ENCODE measurements at regions of chr6 and their contacts with region 1.

Region 1: DNA sequence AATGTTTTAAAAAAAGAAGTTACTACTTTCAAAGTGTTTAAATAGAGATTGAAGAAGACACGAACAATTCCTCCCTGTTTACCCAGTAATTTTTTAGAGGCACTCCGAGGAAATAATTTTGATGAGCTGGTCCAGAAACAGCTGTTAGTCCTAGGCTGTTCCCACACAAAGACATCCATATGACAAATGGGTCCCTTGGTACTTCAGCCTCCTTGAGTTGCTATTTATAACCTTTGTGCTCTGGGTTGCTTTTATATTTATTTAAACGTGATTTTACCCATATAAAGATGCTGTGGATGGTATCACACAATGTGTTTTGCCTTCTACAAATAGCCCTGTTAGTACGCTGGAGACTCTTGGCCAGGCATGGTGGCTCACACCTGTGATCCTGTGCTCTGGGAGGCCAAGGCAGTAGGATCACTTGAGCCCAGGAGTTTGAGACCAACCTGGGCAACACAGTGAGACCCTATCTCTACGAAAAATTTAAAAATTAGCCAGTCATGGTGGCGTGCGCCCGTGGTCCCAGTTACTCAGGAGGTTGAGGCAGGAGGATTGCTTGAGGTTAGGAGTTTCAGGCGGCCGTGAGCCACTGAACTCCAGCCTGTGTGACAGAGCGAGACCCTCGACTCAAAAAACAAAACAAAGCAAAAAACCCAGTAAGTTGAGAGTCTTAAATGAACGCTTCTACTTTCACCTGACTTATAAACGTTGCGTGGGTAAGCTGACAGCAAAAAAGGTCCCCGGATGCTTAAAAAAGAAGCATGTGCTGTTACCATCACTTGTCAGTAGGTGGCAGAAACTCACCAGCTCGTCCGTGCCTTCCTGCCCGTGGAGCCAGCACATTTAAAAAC is 56.9 kb upstream of the ARMH2 start:
- DNase-seq: peak; percentile 66
- ATAC-seq: peak; percentile 90
- H3K4me3 ChIP-seq: no peak overlapping the region
- H3K27ac ChIP-seq: no peak overlapping the region
- H3K4me1 ChIP-seq: peaks cover 13% of the 10 kb centered on the region
- H3K27me3 ChIP-seq: no peaks in the 10 kb centered on the region
- CTCF ChIP-seq: peak; percentile 83

Region 2: GRCh38 chr6:23826572-23826971 is 1029.0 kb before region 1 on chr6:
- intact Hi-C with region 1: no loop called
- DNase-seq: no peak
- ATAC-seq: no peak
- H3K4me3 ChIP-seq: no peak overlapping the region
- H3K27ac ChIP-seq: no peak overlapping the region
- H3K4me1 ChIP-seq: no peaks in the 10 kb centered on the region
- H3K27me3 ChIP-seq: no peaks in the 10 kb centered on the region
- CTCF ChIP-seq: no peak

Region 3: DNA sequence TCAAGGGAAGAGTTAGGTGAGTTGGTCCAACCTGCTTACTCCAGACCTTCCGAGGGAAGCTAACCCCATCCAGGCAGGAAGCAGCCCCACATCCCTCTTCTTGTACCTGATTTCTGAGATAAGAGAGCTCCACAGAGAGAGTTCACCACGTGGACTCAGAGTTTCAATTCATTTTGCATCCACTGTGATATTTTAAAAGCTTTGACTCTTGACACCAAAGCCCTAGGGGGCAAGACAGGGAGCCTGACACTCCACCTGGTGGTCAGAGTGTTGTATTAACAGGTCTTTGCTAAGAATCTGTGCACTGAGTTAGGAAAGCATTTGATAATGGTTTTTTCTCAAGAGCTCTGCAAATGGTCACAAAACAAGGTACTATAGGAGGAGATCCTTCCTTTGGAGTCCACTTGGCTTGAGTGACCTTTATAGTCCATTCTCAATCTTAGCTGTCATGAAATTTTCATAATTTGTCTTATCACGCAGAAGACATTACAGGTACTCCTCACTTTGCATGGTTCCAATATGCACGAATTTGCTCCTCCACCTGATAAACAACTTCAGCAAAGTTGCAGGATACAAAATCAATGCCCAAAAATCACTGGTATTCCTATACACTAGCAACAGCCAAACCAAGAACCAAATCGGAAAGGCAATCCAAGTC is 136.3 kb after region 1 on chr6:
- intact Hi-C with region 1: loop called (anchors 10 kb)
- DNase-seq: no peak
- ATAC-seq: peak; percentile 93
- H3K4me3 ChIP-seq: no peak overlapping the region
- H3K27ac ChIP-seq: no peak overlapping the region
- H3K4me1 ChIP-seq: no peaks in the 10 kb centered on the region
- H3K27me3 ChIP-seq: no peaks in the 10 kb centered on the region
- CTCF ChIP-seq: peak; percentile 72

Measured in upper lobe of right lung (tissue), 1 donor.